Naive thymus-derived CD8-positive, alpha-beta T cell (primary cell): ENCODE measurements at regions of chr17 and their contacts with region 1.

Region 1: GRCh38 chr17:82457997-82458864 is at the start of gene NARF:
- DNase-seq: peak; percentile 90 to 98 (median 96)
- ATAC-seq: peak; percentile 95 to 96
- H3K4me3 Mint-ChIP-seq: peak within 1 kb of the TSS; percentile 85 to 97 (median 91)
- H3K27ac Mint-ChIP-seq: peak within 1 kb of the TSS; percentile 91 to 99 (median 98)
- H3K4me1 Mint-ChIP-seq: peaks cover 19 to 40% (median 30%) of the 10 kb centered on the region in 4 donors
- H3K27me3 Mint-ChIP-seq: no peaks in the 10 kb centered on the region
- polyA plus RNA-seq, gene NARF: 93.6 to 127 (median 110) TPM

Region 2: GRCh38 chr17:82418001-82418986 is 39.9 kb before region 1 on chr17 and contains the starts of genes HEXD and OGFOD3:
- POLR2A ChIA-PET with region 1: interaction called, 16 read pairs
- DNase-seq: peak; percentile 77 to 97 (median 88)
- ATAC-seq: peak; percentile 84 to 87
- H3K4me3 Mint-ChIP-seq: peak within 1 kb of the TSS; percentile 65 to 90 (median 84)
- H3K27ac Mint-ChIP-seq: peak within 1 kb of the TSS in 9 of 10 donors; percentile 66 to 92 (median 85)
- H3K4me1 Mint-ChIP-seq: peaks cover 12 to 39% (median 35%) of the 10 kb centered on the region in 4 donors
- H3K27me3 Mint-ChIP-seq: no peaks in the 10 kb centered on the region
- polyA plus RNA-seq, gene HEXD: 12.1 to 18.8 (median 12.2) TPM
- polyA plus RNA-seq, gene OGFOD3: 32.4 to 35.2 (median 32.6) TPM

Region 3: DNA sequence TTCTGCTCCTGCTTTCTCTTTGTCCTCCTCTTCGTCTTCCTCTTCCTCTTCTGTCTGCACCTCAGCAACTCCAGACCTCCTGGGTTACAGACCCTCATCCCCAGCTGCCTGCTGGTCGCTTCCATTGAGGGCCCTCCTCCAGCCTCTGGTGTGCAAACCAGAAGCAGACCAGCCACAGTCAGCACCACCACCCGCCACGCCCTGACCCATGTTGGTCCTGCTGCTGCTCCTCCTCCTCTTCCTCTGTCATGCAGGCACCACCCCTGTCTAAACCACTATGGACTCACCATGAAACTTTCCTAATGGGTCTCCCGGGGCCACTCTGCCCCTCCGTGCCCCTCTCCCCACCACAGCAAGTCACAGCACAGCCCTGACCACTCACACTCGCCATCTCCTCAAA is 28.4 kb before region 1 on chr17:
- POLR2A ChIA-PET with region 1: no interaction called
- DNase-seq: no peak
- ATAC-seq: no peak
- H3K4me3 Mint-ChIP-seq: peak overlapping the region in 2 of 10 donors; percentile 25 to 55
- H3K27ac Mint-ChIP-seq: peak overlapping the region in 6 of 10 donors; percentile 35 to 91 (median 63)
- H3K4me1 Mint-ChIP-seq: peaks cover 13 to 41% (median 25%) of the 10 kb centered on the region in 4 donors
- H3K27me3 Mint-ChIP-seq: no peaks in the 10 kb centered on the region

Region 4: DNA sequence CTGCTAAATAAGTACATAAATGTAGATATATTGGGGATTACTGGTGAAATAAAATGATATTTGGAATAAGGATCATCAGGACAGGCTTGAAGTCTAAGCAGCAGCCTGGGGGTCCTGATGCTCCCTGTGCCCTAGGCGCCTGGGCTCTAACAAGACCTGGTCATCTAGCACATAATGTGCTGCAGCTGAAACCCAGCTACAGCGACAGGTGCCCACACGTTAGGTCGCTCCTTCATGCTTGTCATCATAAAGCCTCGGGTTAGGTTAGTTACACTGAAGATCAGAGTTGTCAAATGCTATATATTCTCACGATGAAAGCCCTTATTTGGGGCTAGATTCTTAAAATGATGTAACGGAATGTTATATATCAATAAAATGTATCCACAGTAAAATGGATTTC is 11.8 kb after region 1 on chr17:
- POLR2A ChIA-PET with region 1: no interaction called
- DNase-seq: no peak
- ATAC-seq: no peak
- H3K4me3 Mint-ChIP-seq: no peak overlapping the region
- H3K27ac Mint-ChIP-seq: no peak overlapping the region
- H3K4me1 Mint-ChIP-seq: peaks cover 0 to 3% (median under 1%) of the 10 kb centered on the region in 4 donors
- H3K27me3 Mint-ChIP-seq: no peaks in the 10 kb centered on the region

Region 5: DNA sequence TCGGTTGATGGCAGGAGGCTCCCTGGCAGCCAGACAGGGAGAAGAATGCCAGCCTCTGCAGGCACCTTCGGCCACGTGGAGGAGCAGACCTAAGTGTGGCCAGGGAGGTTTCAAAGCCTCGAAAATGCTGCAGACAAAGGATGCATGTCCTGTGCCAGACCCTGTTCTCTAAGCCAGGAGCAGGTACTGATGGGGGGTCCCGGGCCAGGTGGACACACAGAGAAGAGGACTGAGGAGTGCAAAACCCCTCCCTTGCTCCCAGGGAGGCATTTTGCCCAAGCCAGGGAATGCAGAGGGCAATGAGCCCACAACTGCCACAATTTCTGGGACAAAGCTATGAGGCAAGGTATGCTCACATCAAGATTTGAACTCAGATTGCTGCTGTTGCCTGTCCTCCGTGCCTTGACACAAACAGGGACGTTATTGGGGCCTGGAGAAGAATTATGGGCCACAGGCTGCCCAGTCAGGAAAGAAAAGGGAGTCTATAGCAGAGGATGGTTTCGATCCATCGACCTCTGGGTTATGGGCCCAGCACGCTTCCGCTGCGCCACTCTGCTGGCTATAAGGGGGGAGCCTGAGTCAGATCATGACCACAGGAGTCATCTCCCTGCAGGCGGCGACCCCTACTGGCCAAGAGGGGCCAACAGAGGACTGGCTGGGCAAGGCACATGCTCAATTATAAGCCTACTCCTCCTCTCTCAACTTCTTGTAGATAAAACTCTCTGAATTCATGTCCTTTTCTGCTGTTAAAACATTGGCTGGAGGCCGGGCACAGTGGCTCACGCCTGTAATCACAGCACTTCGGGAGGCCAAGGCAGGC is 36.2 kb after region 1 on chr17:
- POLR2A ChIA-PET with region 1: interaction called, 12 read pairs
- DNase-seq: peak; percentile 68 to 93 (median 88)
- ATAC-seq: peak; percentile 58 to 75
- H3K4me3 Mint-ChIP-seq: peak overlapping the region in 9 of 10 donors; percentile 44 to 86 (median 67)
- H3K27ac Mint-ChIP-seq: peak overlapping the region; percentile 55 to 98 (median 89)
- H3K4me1 Mint-ChIP-seq: peaks cover 10 to 29% (median 25%) of the 10 kb centered on the region in 4 donors
- H3K27me3 Mint-ChIP-seq: no peaks in the 10 kb centered on the region

Region 6: DNA sequence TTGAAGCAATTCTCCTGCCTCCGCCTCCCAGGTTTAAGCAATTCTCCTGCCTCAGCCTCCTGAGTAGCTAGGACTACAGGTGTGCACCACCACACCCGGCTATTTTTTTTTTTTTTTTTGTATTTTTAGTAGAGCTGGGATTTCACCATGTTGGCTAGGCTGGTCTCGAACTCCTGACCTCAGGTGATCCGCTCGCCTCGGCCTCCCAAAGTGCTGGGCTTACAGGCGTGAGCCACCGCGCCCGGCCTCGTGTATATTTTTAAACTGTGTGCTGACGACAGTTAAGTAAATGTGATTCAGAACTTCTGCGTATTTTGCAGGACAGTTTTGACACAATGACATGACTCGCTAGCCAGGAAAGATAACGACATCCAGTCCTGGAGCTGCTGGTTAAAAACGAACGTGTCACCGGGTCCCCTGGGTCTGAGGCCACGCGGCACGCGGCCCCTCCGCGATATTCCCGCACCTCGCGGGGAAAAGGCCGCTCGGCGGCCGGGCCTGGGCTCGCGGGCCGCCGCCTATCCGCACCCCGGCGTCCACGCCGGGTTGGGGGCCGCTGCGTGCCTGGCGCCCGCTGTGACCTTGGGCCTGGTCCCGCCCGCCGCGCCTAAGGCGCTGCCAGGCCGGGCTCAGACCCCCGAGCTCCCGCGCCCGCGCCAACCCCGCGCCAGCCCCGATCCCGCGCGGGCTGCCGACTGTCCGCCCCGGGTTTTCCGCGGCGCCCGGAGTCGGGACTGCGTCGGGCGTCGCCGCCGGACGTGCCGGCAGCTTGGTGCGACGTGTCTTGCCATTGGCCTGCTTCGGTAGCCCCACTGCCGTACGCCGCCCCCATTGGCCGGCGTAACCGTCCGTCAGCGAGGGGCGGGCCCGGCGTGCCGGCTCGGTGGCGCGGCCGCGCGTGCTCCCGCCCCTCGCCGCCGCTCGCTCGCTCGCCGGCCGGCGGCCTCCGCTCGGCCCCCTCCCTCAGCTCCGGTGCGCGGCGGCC is 60.9 kb after region 1 on chr17 and contains the start of gene FOXK2:
- POLR2A ChIA-PET with region 1: interaction called, 15 read pairs
- DNase-seq: peak; percentile 90 to 97 (median 95)
- ATAC-seq: peak; percentile 95 to 98
- H3K4me3 Mint-ChIP-seq: peak within 1 kb of the TSS; percentile 84 to 97 (median 89)
- H3K27ac Mint-ChIP-seq: peak within 1 kb of the TSS; percentile 26 to 95 (median 90)
- H3K4me1 Mint-ChIP-seq: peaks cover 15 to 26% (median 24%) of the 10 kb centered on the region in 4 donors
- H3K27me3 Mint-ChIP-seq: no peaks in the 10 kb centered on the region
- polyA plus RNA-seq, gene FOXK2: 3.2 to 5.7 (median 4.3) TPM